ENCODE measurements at regions of chrX and their contacts with region 1.

Region 1: DNA sequence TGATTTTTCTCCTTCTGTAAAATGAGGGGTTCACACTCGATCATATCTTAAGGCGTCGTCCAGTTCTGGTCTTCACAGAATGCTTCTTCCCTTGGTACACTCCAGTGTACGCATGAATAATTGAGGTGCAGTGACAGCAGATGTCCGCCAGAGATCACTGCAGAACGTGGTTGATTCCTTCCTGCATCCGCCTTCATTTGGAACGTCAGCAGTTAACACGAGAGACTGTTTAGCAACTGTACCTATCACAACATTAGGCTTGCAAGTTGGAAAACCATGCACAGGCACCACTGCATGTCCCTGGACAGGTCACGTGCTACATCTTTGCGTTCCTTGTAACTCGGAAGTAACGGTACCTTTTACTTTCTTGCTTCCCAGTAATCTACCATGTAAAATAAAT is 66.0 kb upstream of the GEMIN8 start:
- DNase-seq: no peak
- ATAC-seq: no peak
- H3K4me3 ChIP-seq: no peak overlapping the region
- H3K27ac ChIP-seq: no peak overlapping the region
- H3K4me1 ChIP-seq: no peaks in the 10 kb centered on the region
- H3K27me3 ChIP-seq: no peaks in the 10 kb centered on the region
- CTCF ChIP-seq: peak in 2 of 5 experiments; percentile 25 to 35
- POLR2A ChIP-seq: no peak

Region 2: GRCh38 chrX:13851996-13852695 is 243.6 kb before region 1 on chrX:
- in situ Hi-C with region 1: no loop called
- intact Hi-C with region 1: no loop called
- DNase-seq: no peak
- ATAC-seq: no peak
- H3K4me3 ChIP-seq: no peak overlapping the region
- H3K27ac ChIP-seq: no peak overlapping the region
- H3K4me1 ChIP-seq: no peaks in the 10 kb centered on the region
- H3K27me3 ChIP-seq: no peaks in the 10 kb centered on the region
- CTCF ChIP-seq: no peak
- POLR2A ChIP-seq: no peak

Region 3: GRCh38 chrX:14194711-14195110 is 99.0 kb after region 1 on chrX:
- in situ Hi-C with region 1: loop called in 1 of 4 experiments (anchors 25 kb)
- intact Hi-C with region 1: no loop called
- DNase-seq: no peak
- ATAC-seq: no peak
- H3K4me3 ChIP-seq: no peak overlapping the region
- H3K27ac ChIP-seq: no peak overlapping the region
- H3K4me1 ChIP-seq: no peaks in the 10 kb centered on the region
- H3K27me3 ChIP-seq: no peaks in the 10 kb centered on the region
- CTCF ChIP-seq: no peak
- POLR2A ChIP-seq: no peak

Region 4: GRCh38 chrX:14490136-14490535 is 394.4 kb after region 1 on chrX:
- in situ Hi-C with region 1: no loop called
- intact Hi-C with region 1: no loop called
- DNase-seq: no peak
- ATAC-seq: no peak
- H3K4me3 ChIP-seq: no peak overlapping the region
- H3K27ac ChIP-seq: no peak overlapping the region
- H3K4me1 ChIP-seq: no peaks in the 10 kb centered on the region
- H3K27me3 ChIP-seq: no peaks in the 10 kb centered on the region
- CTCF ChIP-seq: no peak
- POLR2A ChIP-seq: no peak